ENCODE measurements at regions of chrX and their contacts with region 1.

Region 1: GRCh38 chrX:74382613-74383012 is 38.7 kb upstream of the SLC16A2 start:
- DNase-seq: peak; percentile 81
- H3K4me3 Mint-ChIP-seq: no peak overlapping the region
- H3K27ac Mint-ChIP-seq: no peak overlapping the region
- H3K4me1 Mint-ChIP-seq: peaks cover 2% of the 10 kb centered on the region
- H3K27me3 Mint-ChIP-seq: peaks cover 3% of the 10 kb centered on the region

Region 2: GRCh38 chrX:74550295-74550802 is 167.7 kb after region 1 on chrX:
- intact Hi-C with region 1: loop called (anchors 1 kb)
- DNase-seq: peak; percentile 93
- H3K4me3 Mint-ChIP-seq: peak overlapping the region; percentile 53
- H3K27ac Mint-ChIP-seq: peak overlapping the region; percentile 17
- H3K4me1 Mint-ChIP-seq: peaks cover 2% of the 10 kb centered on the region
- H3K27me3 Mint-ChIP-seq: no peaks in the 10 kb centered on the region

Region 3: GRCh38 chrX:74593593-74593992 is 211.0 kb after region 1 on chrX:
- intact Hi-C with region 1: no loop called
- DNase-seq: no peak
- H3K4me3 Mint-ChIP-seq: no peak overlapping the region
- H3K27ac Mint-ChIP-seq: no peak overlapping the region
- H3K4me1 Mint-ChIP-seq: peaks cover 4% of the 10 kb centered on the region
- H3K27me3 Mint-ChIP-seq: no peaks in the 10 kb centered on the region

Measured in activated CD4-positive, alpha-beta T cell treated with anti-CD3 and anti-CD28 coated beads, Interleukin-2, amount 10 ng/mL, durations not matched to agents 24 days and 14 days (primary cell).